Psoas muscle (tissue), 8 donors: ENCODE measurements at regions of chr1 and their contacts with region 1.

Region 1: DNA sequence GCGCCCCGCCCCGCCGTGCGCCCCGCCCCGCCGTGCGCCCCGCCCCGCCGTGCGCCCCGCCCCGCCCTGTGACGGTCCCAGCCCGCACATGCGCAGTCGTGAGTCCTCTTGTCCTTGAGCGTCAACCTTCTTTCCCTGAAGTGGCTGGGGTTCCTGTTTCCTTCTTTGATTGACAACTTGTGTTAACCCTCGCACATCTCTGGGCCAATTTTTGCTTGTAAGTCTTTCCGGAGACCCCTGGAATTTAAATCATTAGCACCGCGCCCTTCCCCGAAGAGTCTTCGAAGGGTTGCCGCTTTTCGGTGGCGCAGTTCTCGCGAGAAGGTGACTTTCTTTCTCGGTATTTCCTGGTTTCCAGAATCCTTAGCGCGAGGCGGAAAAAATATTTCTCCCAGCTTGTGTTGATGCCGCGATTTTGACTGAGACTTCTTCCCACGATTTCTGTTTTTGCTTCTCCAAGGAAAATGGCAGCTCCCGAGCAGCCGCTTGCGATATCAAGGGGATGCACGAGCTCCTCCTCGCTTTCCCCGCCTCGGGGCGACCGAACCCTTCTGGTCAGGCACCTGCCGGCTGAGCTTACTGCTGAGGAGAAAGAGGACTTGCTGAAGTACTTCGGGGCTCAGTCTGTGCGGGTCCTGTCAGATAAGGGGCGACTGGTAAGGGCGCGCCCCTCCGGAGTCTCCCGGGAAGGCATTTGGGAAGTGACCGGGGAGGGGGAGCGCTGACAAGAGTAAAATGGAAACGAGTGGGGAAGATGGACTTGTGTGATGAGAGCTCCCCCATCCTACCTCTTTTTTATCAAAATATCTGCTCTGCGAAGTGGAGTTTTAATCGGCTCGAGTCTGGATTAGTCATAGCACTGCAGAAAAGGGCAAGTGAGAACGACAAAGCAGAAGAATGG is at the start of gene RNPC3:
- DNase-seq: peak; percentile 89 to 95
- ATAC-seq: peak; percentile 85 to 89 (median 87)
- H3K4me3 ChIP-seq: peak within 1 kb of the TSS; percentile 92
- H3K27ac ChIP-seq: peak within 1 kb of the TSS; percentile 92
- H3K4me1 ChIP-seq: peaks cover 33% of the 10 kb centered on the region
- H3K27me3 ChIP-seq: no peaks in the 10 kb centered on the region
- CTCF ChIP-seq: no peak
- total RNA-seq, gene RNPC3: 12.4 to 27.5 (median 18.8) TPM

Region 2: DNA sequence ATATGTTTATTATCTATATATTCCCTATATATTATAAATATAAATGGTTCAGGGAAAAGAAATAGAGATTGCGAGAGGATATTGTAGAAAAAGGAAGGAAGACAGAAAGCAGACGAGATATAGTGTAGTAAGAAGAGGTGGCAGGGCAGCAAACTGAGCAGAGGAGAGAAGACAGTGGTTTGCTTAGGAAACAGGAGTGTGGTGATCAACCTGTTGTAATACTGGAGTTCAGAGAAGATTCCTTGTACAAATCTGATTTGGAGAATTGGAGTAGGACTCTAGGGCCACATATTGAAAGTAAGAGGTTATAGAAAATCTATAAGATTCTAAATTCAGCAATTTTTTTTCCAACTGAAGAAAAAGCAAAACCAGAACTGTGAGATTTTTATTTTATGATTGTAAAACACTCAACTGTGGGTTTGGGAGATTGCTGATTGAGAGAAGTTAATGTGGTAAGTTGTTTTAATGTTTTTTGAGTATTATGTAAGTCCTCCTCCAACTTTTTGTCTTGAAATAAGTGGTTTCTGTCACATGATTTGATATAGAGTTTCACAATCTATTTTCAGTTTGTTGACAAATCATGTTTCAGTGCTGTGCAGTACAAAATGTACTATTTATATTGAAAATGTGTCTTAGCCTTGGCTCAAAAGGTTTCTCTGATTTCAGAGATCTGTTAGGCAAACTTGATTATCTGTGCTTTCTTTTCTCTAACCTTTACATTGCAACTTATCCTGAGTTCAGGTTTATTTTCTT is 36.0 kb after region 1 on chr1:
- intact Hi-C with region 1: loop called (anchors 5 kb)
- DNase-seq: no peak
- ATAC-seq: peak; percentile 71 to 92 (median 80)
- H3K4me3 ChIP-seq: peak overlapping the region; percentile 53
- H3K27ac ChIP-seq: peak overlapping the region; percentile 72
- H3K4me1 ChIP-seq: peaks cover 22% of the 10 kb centered on the region
- H3K27me3 ChIP-seq: no peaks in the 10 kb centered on the region
- CTCF ChIP-seq: no peak